ENCODE measurements at regions of chr4 and their contacts with region 1.

Region 1: GRCh38 chr4:47562297-47562696 is 77.2 kb downstream of the ATP10D start:
- DNase-seq: no peak
- ATAC-seq: no peak
- H3K4me3 ChIP-seq: no peak overlapping the region
- H3K27ac ChIP-seq: no peak overlapping the region
- H3K4me1 ChIP-seq: no peaks in the 10 kb centered on the region
- H3K27me3 ChIP-seq: no peaks in the 10 kb centered on the region

Region 2: GRCh38 chr4:47463235-47463956 is 98.9 kb before region 1 on chr4 and contains the start of gene COMMD8:
- intact Hi-C with region 1: loop called (anchors 1 to 2 kb)
- DNase-seq: peak; percentile 98 to 99
- ATAC-seq: peak; percentile 100
- H3K4me3 ChIP-seq: peak within 1 kb of the TSS; percentile 39 to 78
- H3K27ac ChIP-seq: peak within 1 kb of the TSS; percentile 8 to 48
- H3K4me1 ChIP-seq: no peaks in the 10 kb centered on the region
- H3K27me3 ChIP-seq: no peaks in the 10 kb centered on the region
- total RNA-seq, gene COMMD8: 10.0 to 11.7 TPM

Region 3: GRCh38 chr4:47485047-47485692 is 77.1 kb before region 1 on chr4 and contains the start of gene ATP10D:
- intact Hi-C with region 1: loop called (anchors 5 kb)
- DNase-seq: peak; percentile 98 to 99
- ATAC-seq: peak; percentile 100
- H3K4me3 ChIP-seq: peak within 1 kb of the TSS; percentile 99 to 100
- H3K27ac ChIP-seq: peak within 1 kb of the TSS; percentile 82 to 93
- H3K4me1 ChIP-seq: peaks cover 0 to 3% of the 10 kb centered on the region in 2 donors
- H3K27me3 ChIP-seq: no peaks in the 10 kb centered on the region
- total RNA-seq, gene ATP10D: 55.6 to 57.4 TPM

Region 4: GRCh38 chr4:47490550-47490949 is 71.7 kb before region 1 on chr4:
- intact Hi-C with region 1: loop called (anchors 5 kb)
- DNase-seq: no peak
- ATAC-seq: peak; percentile 26
- H3K4me3 ChIP-seq: no peak overlapping the region
- H3K27ac ChIP-seq: no peak overlapping the region
- H3K4me1 ChIP-seq: peaks cover 0 to 5% of the 10 kb centered on the region in 2 donors
- H3K27me3 ChIP-seq: no peaks in the 10 kb centered on the region

Region 5: DNA sequence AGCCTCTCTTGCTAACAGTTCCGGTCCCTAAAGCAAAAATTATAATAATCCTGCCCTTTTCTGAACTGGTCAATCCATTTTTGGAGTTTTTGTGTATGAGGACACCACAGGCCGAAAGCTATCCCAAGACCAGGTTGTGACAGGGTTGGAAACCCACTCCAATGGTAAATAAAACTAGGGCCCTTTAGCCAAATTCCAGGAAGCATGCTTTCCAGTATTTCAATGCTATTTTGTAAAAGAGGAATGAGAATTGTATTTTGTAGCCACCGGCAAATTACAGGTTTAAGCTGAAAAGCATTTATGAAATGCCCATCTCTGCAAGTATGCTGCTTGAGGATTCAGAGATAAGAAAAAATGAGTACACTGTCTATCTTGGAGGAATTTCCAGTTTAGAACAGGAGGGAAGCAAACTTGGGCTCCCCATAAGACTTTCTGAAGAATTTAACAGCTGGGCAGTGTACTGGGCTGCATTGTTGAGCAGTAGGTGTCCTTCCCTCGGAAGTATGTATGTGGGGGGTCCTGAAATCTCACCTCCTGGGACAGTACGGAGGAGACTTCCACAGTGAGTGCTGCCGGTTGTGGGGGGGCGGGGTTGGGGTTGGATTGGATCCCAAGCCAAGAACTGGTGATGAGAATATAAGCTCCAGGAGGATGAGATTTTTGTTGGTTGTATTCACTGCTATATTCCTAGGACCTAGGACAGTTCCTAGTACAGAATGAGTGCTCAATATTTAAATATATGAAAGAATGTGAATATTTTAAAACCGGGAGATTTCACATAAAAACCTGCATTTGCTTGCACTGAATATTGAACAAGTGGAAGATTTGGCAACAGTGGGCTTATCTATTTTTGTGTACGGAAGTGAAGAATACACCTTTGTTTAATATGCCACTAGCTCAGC is 1317.5 kb after region 1 on chr4:
- intact Hi-C with region 1: no loop called
- DNase-seq: no peak
- ATAC-seq: no peak
- H3K4me3 ChIP-seq: no peak overlapping the region
- H3K27ac ChIP-seq: no peak overlapping the region
- H3K4me1 ChIP-seq: no peaks in the 10 kb centered on the region
- H3K27me3 ChIP-seq: no peaks in the 10 kb centered on the region